OCI-LY7 (cell line): ENCODE measurements at regions of chr3 and their contacts with region 1.

Region 1: DNA sequence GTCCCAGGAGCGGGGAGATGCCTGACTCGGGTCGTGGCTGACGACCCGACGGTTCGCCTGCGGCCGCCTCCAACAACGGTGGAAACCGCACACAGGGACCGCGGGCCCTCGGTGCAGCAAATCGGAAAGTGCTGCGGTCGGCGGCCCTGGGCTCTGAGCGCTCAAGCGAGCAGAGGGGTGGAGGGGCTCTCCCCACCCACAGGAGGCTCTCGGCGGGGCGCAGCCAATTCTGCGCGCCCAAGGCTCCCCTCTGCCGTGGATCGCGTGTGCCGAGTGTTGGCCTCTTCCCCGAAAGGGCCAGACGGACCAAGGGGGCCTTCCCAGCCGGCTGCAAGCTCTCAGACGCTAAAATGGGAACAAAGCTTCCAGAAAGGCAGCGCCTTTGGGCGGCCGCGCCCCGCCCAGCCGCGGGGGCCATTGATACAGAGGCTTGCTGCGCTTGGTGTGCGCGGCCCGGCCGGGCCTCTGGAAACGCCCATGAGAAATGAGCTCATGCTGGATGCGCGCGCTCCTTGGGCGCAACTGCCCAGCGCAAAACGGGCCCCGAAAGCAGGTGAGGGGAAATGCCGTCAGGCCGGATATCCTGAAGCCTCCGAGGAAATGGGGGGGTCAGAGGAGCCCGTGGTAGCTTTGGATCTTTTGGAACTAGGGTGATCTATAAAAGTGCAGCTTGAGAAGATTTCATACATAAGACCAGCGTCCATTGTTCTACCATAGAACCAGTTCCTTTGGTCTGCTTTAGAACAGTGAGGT is 1.2 kb upstream of the GSK3B start:
- DNase-seq: peak; percentile 92
- H3K4me3 ChIP-seq: peak overlapping the region; percentile 81
- H3K27ac ChIP-seq: peak overlapping the region; percentile 97
- H3K4me1 ChIP-seq: peaks cover 22% of the 10 kb centered on the region
- CTCF ChIP-seq: no peak

Region 2: DNA sequence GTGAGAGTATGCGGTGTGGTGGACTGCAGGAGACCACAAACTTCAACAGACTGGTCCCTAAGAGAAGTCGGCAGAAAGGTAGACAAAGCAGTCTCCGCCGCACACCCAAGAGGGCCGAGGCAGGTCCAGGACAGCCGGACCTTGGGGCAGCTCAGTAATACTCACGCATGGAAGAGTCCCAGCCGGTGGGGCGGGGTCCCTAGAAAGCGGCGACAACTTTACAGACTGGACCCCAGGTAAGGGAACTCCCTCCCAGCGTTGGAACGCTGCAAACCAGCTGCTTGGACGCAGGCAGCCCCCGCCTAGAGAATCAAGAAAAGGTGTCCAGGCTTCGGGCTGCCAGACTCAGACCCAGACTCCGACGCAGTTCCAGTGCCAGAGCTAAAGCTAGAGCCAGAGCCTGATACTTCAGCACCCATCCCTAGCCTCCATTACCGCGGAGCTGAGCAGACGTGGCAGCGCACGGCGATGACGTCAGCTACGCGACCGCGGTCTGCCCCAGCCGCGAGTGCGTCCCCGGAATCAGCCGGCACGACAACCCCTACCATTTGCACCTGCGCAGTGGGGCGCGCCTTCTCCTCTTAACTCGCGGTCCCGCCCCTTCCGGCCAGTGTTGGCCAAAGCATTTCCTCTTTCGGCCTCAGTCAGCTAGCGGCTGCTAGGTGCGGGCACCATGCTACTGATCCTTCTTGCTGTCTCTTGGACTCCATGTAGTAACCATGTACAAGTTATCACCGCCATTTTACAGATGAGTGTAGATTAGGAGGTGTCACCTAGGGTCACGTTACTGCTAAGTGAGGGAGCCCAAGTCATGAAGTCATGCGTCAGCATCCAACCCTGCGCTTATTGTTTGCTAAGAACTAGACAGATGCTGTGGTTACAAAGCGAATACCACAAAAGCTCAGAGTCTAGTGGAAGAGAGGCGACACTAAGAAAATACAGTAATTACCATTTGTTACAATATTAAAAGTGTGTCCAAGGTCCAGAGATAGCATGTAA is 631.9 kb before region 1 on chr3 and contains the start of gene TMEM39A:
- CTCF ChIA-PET with region 1: no interaction called
- POLR2A ChIA-PET with region 1: interaction called, 3 read pairs
- intact Hi-C with region 1: loop called (anchors 10 kb)
- DNase-seq: peak; percentile 99
- H3K4me3 ChIP-seq: peak within 1 kb of the TSS; percentile 91
- H3K27ac ChIP-seq: peak within 1 kb of the TSS; percentile 66
- H3K4me1 ChIP-seq: peaks cover 23% of the 10 kb centered on the region
- CTCF ChIP-seq: no peak
- total RNA-seq, gene TMEM39A: 31.6 and 35.3 TPM in 2 replicates

Region 3: DNA sequence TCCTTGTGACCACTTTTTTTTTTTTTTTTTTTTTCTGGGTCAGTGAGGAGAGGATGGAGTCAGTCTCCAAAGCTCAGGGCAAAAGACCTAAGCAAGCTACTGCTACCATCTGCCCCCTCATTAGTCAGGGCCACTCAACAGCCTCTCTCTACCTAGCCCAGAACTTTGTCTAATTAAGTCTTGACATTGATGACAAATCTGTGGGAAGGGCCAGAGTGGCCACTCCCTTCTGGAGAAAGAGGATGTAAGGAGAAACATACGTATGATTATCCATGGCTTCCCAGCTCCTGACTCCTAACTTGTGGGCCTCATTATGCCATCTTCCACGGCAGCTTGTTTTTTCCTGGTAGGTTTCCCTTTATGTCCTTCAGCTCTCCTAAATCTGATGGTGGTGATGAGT is 275.6 kb before region 1 on chr3:
- CTCF ChIA-PET with region 1: no interaction called
- POLR2A ChIA-PET with region 1: no interaction called
- intact Hi-C with region 1: no loop called
- DNase-seq: no peak
- H3K4me3 ChIP-seq: no peak overlapping the region
- H3K27ac ChIP-seq: no peak overlapping the region
- H3K4me1 ChIP-seq: no peaks in the 10 kb centered on the region
- CTCF ChIP-seq: no peak

Region 4: DNA sequence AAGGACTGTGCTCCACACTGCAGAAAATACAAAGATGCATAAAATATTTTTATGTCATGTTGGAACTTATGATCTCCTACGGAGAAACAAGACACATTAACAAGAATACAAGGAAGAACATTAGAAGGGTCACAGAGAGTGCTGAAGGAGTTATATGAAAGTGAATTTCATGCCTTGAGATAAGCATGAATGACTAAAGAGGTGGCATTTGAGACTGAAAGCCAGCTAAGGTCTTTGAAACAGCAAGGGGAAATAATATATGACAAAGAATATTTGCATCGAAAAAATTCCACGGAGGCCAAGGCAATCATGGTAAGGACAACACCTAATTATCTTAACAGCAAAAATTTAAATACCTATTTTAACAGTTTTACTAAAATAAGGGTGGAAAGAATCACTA is 13.7 kb before region 1 on chr3:
- CTCF ChIA-PET with region 1: interaction called, 8 read pairs
- POLR2A ChIA-PET with region 1: interaction called, 31 read pairs
- intact Hi-C with region 1: no loop called
- DNase-seq: no peak
- H3K4me3 ChIP-seq: no peak overlapping the region
- H3K27ac ChIP-seq: no peak overlapping the region
- H3K4me1 ChIP-seq: no peaks in the 10 kb centered on the region
- CTCF ChIP-seq: no peak

Region 5: DNA sequence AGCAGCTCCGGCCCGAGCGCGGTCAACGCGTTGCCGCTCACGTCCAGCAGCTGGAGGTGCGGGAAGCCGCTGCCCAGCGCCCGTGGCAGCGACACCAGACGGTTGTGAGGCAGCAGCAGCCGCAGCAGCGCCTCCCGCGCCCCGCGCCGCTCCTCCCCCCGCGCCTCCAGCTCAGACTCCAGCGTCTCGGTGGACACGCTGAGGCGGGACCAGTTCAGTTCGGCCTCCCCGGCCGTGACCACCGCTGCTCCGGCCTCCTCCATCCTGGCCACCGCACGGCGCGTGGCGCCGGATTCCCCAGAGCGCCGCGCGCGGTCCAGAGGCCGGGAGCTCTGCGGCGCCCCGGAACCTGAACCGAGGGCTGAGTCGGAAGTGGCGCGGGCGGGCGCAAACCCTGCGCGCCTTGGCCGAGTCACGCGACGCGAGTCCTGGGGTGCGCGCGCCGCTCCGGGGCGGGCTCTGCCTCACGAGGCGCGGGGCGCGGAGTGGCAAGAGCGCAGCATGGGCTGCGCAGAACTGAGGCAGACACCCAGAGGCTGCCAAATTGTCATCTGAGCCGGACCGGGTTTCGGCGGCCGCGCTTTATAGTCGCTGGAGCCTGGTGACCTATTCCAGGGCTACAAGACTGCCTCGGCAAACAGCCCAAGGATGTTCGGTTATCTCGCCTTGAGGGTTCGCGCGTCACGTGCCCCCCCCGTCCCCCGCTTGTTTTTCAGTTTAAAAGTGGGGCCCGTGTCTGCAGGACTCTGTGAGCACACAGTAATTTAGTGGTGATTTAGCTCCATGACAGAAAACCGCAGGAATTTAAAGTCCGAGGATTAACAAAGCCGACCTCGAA is 253.8 kb after region 1 on chr3 and contains the start of gene LRRC58:
- CTCF ChIA-PET with region 1: no interaction called
- POLR2A ChIA-PET with region 1: interaction called, 14 read pairs
- intact Hi-C with region 1: loop called (anchors 1 kb)
- DNase-seq: peak; percentile 94
- H3K4me3 ChIP-seq: peak within 1 kb of the TSS; percentile 88
- H3K27ac ChIP-seq: peak within 1 kb of the TSS; percentile 69
- H3K4me1 ChIP-seq: peaks cover 26% of the 10 kb centered on the region
- CTCF ChIP-seq: peak; percentile 64
- total RNA-seq, gene LRRC58: 21.5 and 24.1 TPM in 2 replicates

Region 6: GRCh38 chr3:120742198-120742849 is 646.9 kb after region 1 on chr3 and contains the starts of genes GTF2E1 and RABL3:
- CTCF ChIA-PET with region 1: no interaction called
- POLR2A ChIA-PET with region 1: interaction called, 4 read pairs
- intact Hi-C with region 1: loop called (anchors 2 kb)
- DNase-seq: peak; percentile 99
- H3K4me3 ChIP-seq: peak within 1 kb of the TSS; percentile 99
- H3K27ac ChIP-seq: peak within 1 kb of the TSS; percentile 86
- H3K4me1 ChIP-seq: peaks cover 25% of the 10 kb centered on the region
- CTCF ChIP-seq: no peak
- total RNA-seq, gene GTF2E1: 14.8 and 16.3 TPM in 2 replicates
- total RNA-seq, gene RABL3: 7.7 and 15.7 TPM in 2 replicates